ENCODE measurements at regions of chr10 and their contacts with region 1.

Region 1: GRCh38 chr10:8059959-8060703 is 5.6 kb downstream of the GATA3 start:
- DNase-seq: peak; percentile 81
- ATAC-seq: peak; percentile 37
- H3K4me3 Mint-ChIP-seq: peak overlapping the region; percentile 89
- H3K27ac Mint-ChIP-seq: peak overlapping the region; percentile 98
- H3K4me1 Mint-ChIP-seq: peaks cover 74% of the 10 kb centered on the region
- H3K27me3 Mint-ChIP-seq: no peaks in the 10 kb centered on the region
- CTCF ChIP-seq: no peak

Region 2: GRCh38 chr10:8245131-8245813 is 185.1 kb after region 1 on chr10:
- CTCF ChIA-PET with region 1: no interaction called
- POLR2A ChIA-PET with region 1: interaction called, 3 read pairs
- intact Hi-C with region 1: loop called (anchors 2 kb)
- DNase-seq: peak; percentile 22
- ATAC-seq: no peak
- H3K4me3 Mint-ChIP-seq: peak overlapping the region; percentile 49
- H3K27ac Mint-ChIP-seq: peak overlapping the region; percentile 79
- H3K4me1 Mint-ChIP-seq: peaks cover 53% of the 10 kb centered on the region
- H3K27me3 Mint-ChIP-seq: no peaks in the 10 kb centered on the region
- CTCF ChIP-seq: no peak

Region 3: GRCh38 chr10:8331883-8332729 is 272.0 kb after region 1 on chr10:
- CTCF ChIA-PET with region 1: no interaction called
- POLR2A ChIA-PET with region 1: interaction called, 7 read pairs
- intact Hi-C with region 1: loop called (anchors 5 kb)
- DNase-seq: peak; percentile 88
- ATAC-seq: peak; percentile 95
- H3K4me3 Mint-ChIP-seq: peak overlapping the region; percentile 73
- H3K27ac Mint-ChIP-seq: peak overlapping the region; percentile 84
- H3K4me1 Mint-ChIP-seq: peaks cover 37% of the 10 kb centered on the region
- H3K27me3 Mint-ChIP-seq: no peaks in the 10 kb centered on the region
- CTCF ChIP-seq: no peak